Common myeloid progenitor, CD34-positive (primary cell): ENCODE measurements at regions of chr11 and their contacts with region 1.

Region 1: GRCh38 chr11:8006349-8006977 is 19.3 kb downstream of the EIF3F start:
- DNase-seq: peak; percentile 51 to 69 (median 61)
- H3K4me3 ChIP-seq: no peak overlapping the region
- H3K27ac ChIP-seq: no peak overlapping the region
- H3K4me1 ChIP-seq: no peaks in the 10 kb centered on the region
- H3K27me3 ChIP-seq: peaks cover 0 to 2% (median 0%) of the 10 kb centered on the region in 5 experiments

Region 2: GRCh38 chr11:7986768-7987559 is 19.5 kb before region 1 on chr11 and contains the start of gene EIF3F:
- CTCF ChIA-PET with region 1: interaction called, 12 read pairs
- POLR2A ChIA-PET with region 1: no interaction called
- DNase-seq: peak; percentile 100
- H3K4me3 ChIP-seq: peak within 1 kb of the TSS; percentile 56 to 93 (median 86)
- H3K27ac ChIP-seq: peak within 1 kb of the TSS; percentile 69 to 87
- H3K4me1 ChIP-seq: peaks cover 6 to 24% (median 18%) of the 10 kb centered on the region in 4 experiments
- H3K27me3 ChIP-seq: peaks cover 0 to 4% (median 0%) of the 10 kb centered on the region in 5 experiments

Region 3: GRCh38 chr11:8018484-8019313 is 12.2 kb after region 1 on chr11:
- CTCF ChIA-PET with region 1: interaction called, 53 read pairs
- POLR2A ChIA-PET with region 1: no interaction called
- DNase-seq: peak; percentile 46 to 80 (median 70)
- H3K4me3 ChIP-seq: peak overlapping the region in 6 of 7 experiments; percentile 45 to 77 (median 62)
- H3K27ac ChIP-seq: no peak overlapping the region
- H3K4me1 ChIP-seq: peaks cover 2 to 19% (median 11%) of the 10 kb centered on the region in 4 experiments
- H3K27me3 ChIP-seq: peaks cover 13 to 58% (median 42%) of the 10 kb centered on the region in 5 experiments